ENCODE measurements at regions of chr15 and their contacts with region 1.

Region 1: GRCh38 chr15:45457641-45458433 is 64.7 kb downstream of the SLC30A4 start:
- DNase-seq: peak; percentile 82
- H3K4me3 ChIP-seq: peak overlapping the region; percentile 16 to 27
- H3K27ac ChIP-seq: peak overlapping the region; percentile 80 to 81
- H3K4me1 ChIP-seq: no peaks in the 10 kb centered on the region
- H3K27me3 ChIP-seq: no peaks in the 10 kb centered on the region
- CTCF ChIP-seq: peak; percentile 77 to 96 (median 79)
- POLR2A ChIP-seq: no peak

Region 2: DNA sequence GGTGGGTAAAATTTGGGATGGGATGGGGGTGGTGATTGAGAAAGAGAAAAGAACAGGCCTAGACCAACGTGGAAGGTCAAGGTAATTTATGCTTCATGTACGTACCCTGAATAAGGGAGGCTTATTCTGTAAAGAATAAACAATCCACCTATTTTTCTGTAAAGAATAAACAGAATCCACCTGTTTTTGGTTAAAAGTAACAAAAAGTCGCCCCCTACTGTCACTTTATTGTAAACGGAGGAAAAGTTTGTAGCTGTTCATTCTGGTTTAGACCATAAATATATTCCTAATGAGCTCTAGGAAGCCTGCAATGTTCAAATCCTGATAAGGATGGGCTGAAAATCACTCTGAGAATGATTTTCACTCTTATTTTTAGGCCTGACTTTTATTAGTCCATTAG is 153.5 kb after region 1 on chr15:
- intact Hi-C with region 1: loop called (anchors 2 kb)
- DNase-seq: no peak
- H3K4me3 ChIP-seq: no peak overlapping the region
- H3K27ac ChIP-seq: no peak overlapping the region
- H3K4me1 ChIP-seq: no peaks in the 10 kb centered on the region
- H3K27me3 ChIP-seq: no peaks in the 10 kb centered on the region
- CTCF ChIP-seq: peak in 3 of 4 experiments; percentile 40 to 50 (median 49)
- POLR2A ChIP-seq: no peak

Region 3: DNA sequence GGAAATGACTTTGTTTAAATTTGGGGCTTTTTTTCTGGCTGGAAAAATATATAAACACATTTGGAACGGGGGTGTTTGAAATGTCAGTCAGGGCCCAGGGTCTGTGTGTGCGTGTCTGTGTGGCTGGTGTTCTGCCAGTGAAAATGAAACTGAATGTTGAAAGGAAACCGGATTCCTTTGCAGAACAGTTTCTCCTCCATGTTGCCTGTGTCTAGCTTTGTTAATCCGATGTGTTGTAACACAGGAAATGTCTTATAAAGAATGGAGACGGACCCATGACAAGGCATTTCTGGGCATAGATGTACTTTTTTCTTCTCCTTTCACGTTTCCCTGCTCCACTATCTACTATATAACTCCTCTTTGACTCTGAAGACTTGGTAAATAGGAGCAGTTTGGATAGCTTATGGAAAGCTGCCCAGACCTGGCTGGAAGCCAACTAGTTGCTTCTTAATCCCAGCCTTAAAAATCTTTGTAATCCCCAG is 179.8 kb after region 1 on chr15:
- intact Hi-C with region 1: no loop called
- DNase-seq: peak; percentile 71
- H3K4me3 ChIP-seq: peak overlapping the region; percentile 3 to 16
- H3K27ac ChIP-seq: peak overlapping the region; percentile 75 to 80
- H3K4me1 ChIP-seq: peaks cover 11% of the 10 kb centered on the region
- H3K27me3 ChIP-seq: no peaks in the 10 kb centered on the region
- CTCF ChIP-seq: no peak
- POLR2A ChIP-seq: peak; percentile 28

Measured in prostate gland (tissue), 2 donors.